Heart right ventricle (tissue), 16 donors: ENCODE measurements at regions of chr1 and their contacts with region 1.

Region 1: DNA sequence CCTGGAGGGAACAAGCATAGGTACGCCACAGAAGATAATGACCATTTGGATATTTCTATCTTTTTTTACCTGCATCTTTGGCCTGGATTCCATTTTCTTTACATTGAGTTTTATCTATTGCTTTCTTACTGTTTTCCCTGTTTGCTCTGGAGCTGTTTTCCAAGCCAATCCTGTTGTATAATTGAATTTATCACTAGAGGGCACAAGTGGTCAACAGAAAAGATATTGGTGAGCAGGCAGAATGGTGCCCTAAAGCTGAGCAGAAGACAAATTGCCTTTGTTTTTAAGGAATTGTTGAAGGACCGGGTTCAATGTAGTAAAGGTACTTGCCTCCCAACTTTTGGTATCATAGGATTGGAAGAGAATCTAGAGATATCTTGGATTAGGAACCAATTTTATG is 152.8 kb downstream of the PPP1R12B start:
- DNase-seq: no peak
- ATAC-seq: peak in 3 of 8 donors; percentile 19 to 47 (median 37)
- H3K4me3 ChIP-seq: no peak overlapping the region
- H3K27ac ChIP-seq: no peak overlapping the region
- H3K4me1 ChIP-seq: peaks cover 0 to 71% (median 17%) of the 10 kb centered on the region in 9 donors
- H3K27me3 ChIP-seq: peaks cover 0 to 44% (median 0%) of the 10 kb centered on the region in 7 donors
- CTCF ChIP-seq: peak; percentile 14 to 69 (median 58)

Region 2: GRCh38 chr1:202565890-202566602 is 64.8 kb after region 1 on chr1:
- intact Hi-C with region 1: loop called in 4 of 10 experiments (anchors 5 to 10 kb)
- DNase-seq: no peak
- ATAC-seq: peak in 3 of 8 donors; percentile 16 to 26 (median 26)
- H3K4me3 ChIP-seq: no peak overlapping the region
- H3K27ac ChIP-seq: peak overlapping the region in 9 of 10 donors; percentile 4 to 60 (median 33)
- H3K4me1 ChIP-seq: peaks cover 7 to 85% (median 54%) of the 10 kb centered on the region in 9 donors
- H3K27me3 ChIP-seq: no peaks in the 10 kb centered on the region
- CTCF ChIP-seq: no peak

Region 3: GRCh38 chr1:202571347-202572339 is 70.4 kb after region 1 on chr1:
- intact Hi-C with region 1: loop called in 4 of 10 experiments (anchors 5 to 10 kb)
- DNase-seq: no peak
- ATAC-seq: no peak
- H3K4me3 ChIP-seq: no peak overlapping the region
- H3K27ac ChIP-seq: peak overlapping the region in 1 of 10 donors; percentile 24
- H3K4me1 ChIP-seq: peaks cover 2 to 77% (median 43%) of the 10 kb centered on the region in 9 donors
- H3K27me3 ChIP-seq: peaks cover 0 to 20% (median 0%) of the 10 kb centered on the region in 7 donors
- CTCF ChIP-seq: peak; percentile 62 to 85 (median 76)

Region 4: GRCh38 chr1:202579806-202580205 is 78.5 kb after region 1 on chr1:
- intact Hi-C with region 1: loop called in 2 of 10 experiments (anchors 5 to 10 kb)
- DNase-seq: no peak
- ATAC-seq: peak; percentile 6 to 53 (median 44)
- H3K4me3 ChIP-seq: no peak overlapping the region
- H3K27ac ChIP-seq: peak overlapping the region in 9 of 10 donors; percentile 5 to 74 (median 58)
- H3K4me1 ChIP-seq: peaks cover 7 to 74% (median 57%) of the 10 kb centered on the region in 9 donors
- H3K27me3 ChIP-seq: peaks cover 0 to 46% (median 0%) of the 10 kb centered on the region in 7 donors
- CTCF ChIP-seq: no peak

Region 5: GRCh38 chr1:202599677-202600431 is 98.6 kb after region 1 on chr1:
- intact Hi-C with region 1: loop called in 8 of 10 experiments (anchors 10 kb)
- DNase-seq: peak; percentile 51 to 57
- ATAC-seq: peak; percentile 73 to 91 (median 82)
- H3K4me3 ChIP-seq: no peak overlapping the region
- H3K27ac ChIP-seq: peak overlapping the region in 4 of 10 donors; percentile 6 to 53 (median 27)
- H3K4me1 ChIP-seq: peaks cover 0 to 9% (median 6%) of the 10 kb centered on the region in 9 donors
- H3K27me3 ChIP-seq: peaks cover 0 to 80% (median 0%) of the 10 kb centered on the region in 7 donors
- CTCF ChIP-seq: peak; percentile 47 to 82 (median 75)

Region 6: GRCh38 chr1:202625416-202626360 is 124.4 kb after region 1 on chr1:
- intact Hi-C with region 1: loop called in 1 of 10 experiments (anchors 10 kb)
- DNase-seq: peak; percentile 63 to 79
- ATAC-seq: peak; percentile 71 to 87 (median 80)
- H3K4me3 ChIP-seq: no peak overlapping the region
- H3K27ac ChIP-seq: peak overlapping the region in 1 of 10 donors; percentile 30
- H3K4me1 ChIP-seq: peaks cover 2 to 38% (median 29%) of the 10 kb centered on the region in 9 donors
- H3K27me3 ChIP-seq: peaks cover 0 to 70% (median 2%) of the 10 kb centered on the region in 7 donors
- CTCF ChIP-seq: peak; percentile 53 to 83 (median 72)